Activated naive CD4-positive, alpha-beta T cell treated with anti-CD3 and anti-CD28 coated beads, Interleukin-2, amount 10 ng/mL, durations not matched to agents 7 days and 5 days (primary cell): ENCODE measurements at regions of chr4 and their contacts with region 1.

Region 1: GRCh38 chr4:26860157-26860921 is at the start of gene STIM2:
- DNase-seq: peak; percentile 97
- H3K4me3 Mint-ChIP-seq: peak within 1 kb of the TSS; percentile 98
- H3K27ac Mint-ChIP-seq: peak within 1 kb of the TSS; percentile 99
- H3K4me1 Mint-ChIP-seq: peaks cover 55% of the 10 kb centered on the region
- H3K27me3 Mint-ChIP-seq: peaks cover 4% of the 10 kb centered on the region

Region 2: GRCh38 chr4:26885912-26886274 is 25.6 kb after region 1 on chr4:
- CTCF ChIA-PET with region 1: interaction called, 15 read pairs
- DNase-seq: peak; percentile 45
- H3K4me3 Mint-ChIP-seq: peak overlapping the region; percentile 63
- H3K27ac Mint-ChIP-seq: peak overlapping the region; percentile 92
- H3K4me1 Mint-ChIP-seq: peaks cover 88% of the 10 kb centered on the region
- H3K27me3 Mint-ChIP-seq: no peaks in the 10 kb centered on the region